ENCODE measurements at regions of chr14 and their contacts with region 1.

Region 1: GRCh38 chr14:50396631-50397390 is at the start of gene CDKL1:
- DNase-seq: peak; percentile 64 to 86 (median 68)
- ATAC-seq: peak; percentile 68 to 95 (median 89)
- H3K4me3 ChIP-seq: peak within 1 kb of the TSS; percentile 49 to 92 (median 66)
- H3K27ac ChIP-seq: peak within 1 kb of the TSS in 11 of 12 donors; percentile 44 to 89 (median 72)
- H3K4me1 ChIP-seq: peaks cover 3 to 26% (median 9%) of the 10 kb centered on the region in 12 donors
- H3K27me3 ChIP-seq: no peaks in the 10 kb centered on the region
- CTCF ChIP-seq: peak in 1 of 12 donors; percentile 5
- POLR2A ChIP-seq: peak in 1 of 2 donors; percentile 28
- total RNA-seq, gene CDKL1: 1.7 to 7.0 (median 2.6) TPM

Region 2: DNA sequence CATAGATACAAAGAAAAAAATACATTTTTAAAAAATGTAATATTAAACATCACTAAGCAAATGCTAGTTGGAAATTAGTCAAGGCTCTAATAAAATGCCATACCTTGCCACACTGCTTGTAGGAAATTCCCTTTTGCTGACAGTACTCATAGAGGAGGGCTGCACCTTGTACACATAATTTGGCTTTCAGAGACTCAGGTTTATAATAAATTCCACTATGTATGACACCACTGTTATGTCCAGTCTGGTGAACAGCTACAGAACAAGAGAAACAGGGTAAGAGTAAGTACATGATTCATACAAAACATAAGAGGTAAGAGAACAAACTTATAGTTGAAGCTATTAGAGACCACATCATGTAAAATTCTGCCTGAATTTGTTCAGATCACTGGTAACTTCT is 94.9 kb before region 1 on chr14:
- intact Hi-C with region 1: no loop called
- DNase-seq: no peak
- ATAC-seq: no peak
- H3K4me3 ChIP-seq: no peak overlapping the region
- H3K27ac ChIP-seq: no peak overlapping the region
- H3K4me1 ChIP-seq: no peaks in the 10 kb centered on the region
- H3K27me3 ChIP-seq: no peaks in the 10 kb centered on the region
- CTCF ChIP-seq: no peak
- POLR2A ChIP-seq: no peak

Region 3: GRCh38 chr14:50311975-50312733 is 84.7 kb before region 1 on chr14 and contains the starts of genes DMAC2L and L2HGDH:
- intact Hi-C with region 1: loop called in 1 of 10 experiments (anchors 5 kb)
- DNase-seq: peak; percentile 93 to 96 (median 95)
- ATAC-seq: peak; percentile 99
- H3K4me3 ChIP-seq: peak within 1 kb of the TSS; percentile 64 to 96 (median 84)
- H3K27ac ChIP-seq: peak within 1 kb of the TSS; percentile 67 to 95 (median 93)
- H3K4me1 ChIP-seq: peaks cover 0 to 21% (median 15%) of the 10 kb centered on the region in 12 donors
- H3K27me3 ChIP-seq: no peaks in the 10 kb centered on the region
- CTCF ChIP-seq: peak in 6 of 12 donors; percentile 6 to 47 (median 30)
- POLR2A ChIP-seq: peak in 1 of 2 donors; percentile 77
- total RNA-seq, gene DMAC2L: 12.6 to 29.9 (median 23.7) TPM
- total RNA-seq, gene L2HGDH: 6.5 to 12.2 (median 9.1) TPM

Region 4: GRCh38 chr14:50321009-50321660 is 75.7 kb before region 1 on chr14:
- intact Hi-C with region 1: loop called in 1 of 10 experiments (anchors 5 kb)
- DNase-seq: peak in 3 of 5 donors; percentile 49 to 66 (median 63)
- ATAC-seq: peak; percentile 88 to 97 (median 96)
- H3K4me3 ChIP-seq: peak overlapping the region in 9 of 12 donors; percentile 15 to 49 (median 33)
- H3K27ac ChIP-seq: peak overlapping the region; percentile 10 to 77 (median 56)
- H3K4me1 ChIP-seq: peaks cover 0 to 28% (median 8%) of the 10 kb centered on the region in 12 donors
- H3K27me3 ChIP-seq: no peaks in the 10 kb centered on the region
- CTCF ChIP-seq: peak; percentile 74 to 95 (median 86)
- POLR2A ChIP-seq: no peak

Region 5: GRCh38 chr14:50335389-50335788 is 61.4 kb before region 1 on chr14:
- intact Hi-C with region 1: loop called in 4 of 10 experiments (anchors 5 to 10 kb)
- DNase-seq: peak in 4 of 5 donors; percentile 45 to 68 (median 53)
- ATAC-seq: peak; percentile 38 to 70 (median 56)
- H3K4me3 ChIP-seq: no peak overlapping the region
- H3K27ac ChIP-seq: peak overlapping the region; percentile 59 to 87 (median 76)
- H3K4me1 ChIP-seq: peaks cover 0 to 46% (median 34%) of the 10 kb centered on the region in 12 donors
- H3K27me3 ChIP-seq: no peaks in the 10 kb centered on the region
- CTCF ChIP-seq: peak in 3 of 12 donors; percentile 5 to 17 (median 7)
- POLR2A ChIP-seq: no peak

Region 6: GRCh38 chr14:50342221-50343078 is 54.4 kb before region 1 on chr14:
- intact Hi-C with region 1: loop called in 6 of 10 experiments (anchors 5 to 10 kb)
- DNase-seq: peak; percentile 58 to 64 (median 62)
- ATAC-seq: peak; percentile 85 to 95 (median 93)
- H3K4me3 ChIP-seq: peak overlapping the region in 9 of 12 donors; percentile 3 to 38 (median 26)
- H3K27ac ChIP-seq: peak overlapping the region; percentile 18 to 77 (median 49)
- H3K4me1 ChIP-seq: peaks cover 0 to 38% (median 22%) of the 10 kb centered on the region in 12 donors
- H3K27me3 ChIP-seq: no peaks in the 10 kb centered on the region
- CTCF ChIP-seq: peak in 11 of 12 donors; percentile 19 to 64 (median 38)
- POLR2A ChIP-seq: no peak

Region 7: DNA sequence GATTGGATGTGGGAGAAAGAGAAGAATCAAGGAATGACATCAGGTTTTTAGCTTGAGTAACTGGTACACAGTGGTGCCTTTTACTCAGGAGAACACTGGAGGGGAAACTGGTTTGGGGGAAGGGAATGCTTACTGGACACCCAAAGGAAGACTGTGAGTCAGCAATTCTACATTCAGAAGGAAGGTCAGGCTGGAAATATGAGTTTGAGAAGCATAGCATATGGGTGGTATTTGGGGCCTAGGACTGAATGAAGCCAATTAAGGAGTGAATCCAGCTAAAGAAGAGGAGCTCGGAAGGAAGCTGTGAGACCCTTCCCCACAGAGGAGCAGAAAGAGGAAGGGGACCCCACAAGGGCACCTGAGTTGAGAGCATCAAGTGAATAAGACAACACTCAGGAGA is 49.3 kb before region 1 on chr14:
- intact Hi-C with region 1: loop called in 5 of 10 experiments (anchors 5 to 10 kb)
- DNase-seq: no peak
- ATAC-seq: peak in 2 of 4 donors; percentile 41 to 50
- H3K4me3 ChIP-seq: no peak overlapping the region
- H3K27ac ChIP-seq: peak overlapping the region in 2 of 12 donors; percentile 2 to 68
- H3K4me1 ChIP-seq: peaks cover 0 to 38% (median 19%) of the 10 kb centered on the region in 12 donors
- H3K27me3 ChIP-seq: no peaks in the 10 kb centered on the region
- CTCF ChIP-seq: no peak
- POLR2A ChIP-seq: no peak

Region 8: GRCh38 chr14:50477760-50478159 is 80.9 kb after region 1 on chr14:
- intact Hi-C with region 1: no loop called
- DNase-seq: no peak
- ATAC-seq: no peak
- H3K4me3 ChIP-seq: no peak overlapping the region
- H3K27ac ChIP-seq: no peak overlapping the region
- H3K4me1 ChIP-seq: no peaks in the 10 kb centered on the region
- H3K27me3 ChIP-seq: no peaks in the 10 kb centered on the region
- CTCF ChIP-seq: no peak
- POLR2A ChIP-seq: no peak

Region 9: GRCh38 chr14:50532502-50533240 is 135.9 kb after region 1 on chr14 and contains the start of gene MAP4K5:
- intact Hi-C with region 1: loop called in 1 of 10 experiments (anchors 5 kb)
- DNase-seq: peak; percentile 91 to 96 (median 93)
- ATAC-seq: peak; percentile 97 to 100 (median 100)
- H3K4me3 ChIP-seq: peak within 1 kb of the TSS; percentile 72 to 98 (median 90)
- H3K27ac ChIP-seq: peak within 1 kb of the TSS; percentile 78 to 98 (median 94)
- H3K4me1 ChIP-seq: peaks cover 5 to 44% (median 25%) of the 10 kb centered on the region in 12 donors
- H3K27me3 ChIP-seq: no peaks in the 10 kb centered on the region
- CTCF ChIP-seq: peak; percentile 79 to 96 (median 93)
- POLR2A ChIP-seq: peak in 1 of 2 donors; percentile 85
- total RNA-seq, gene MAP4K5: 9.0 to 43.3 (median 16.6) TPM